GM10248 (cell line): ENCODE measurements at regions of chr3 and their contacts with region 1.

Region 1: GRCh38 chr3:44913868-44914468 is 39.6 kb downstream of the TGM4 start:
- DNase-seq: peak; percentile 77
- CTCF ChIP-seq: peak; percentile 83

Region 2: DNA sequence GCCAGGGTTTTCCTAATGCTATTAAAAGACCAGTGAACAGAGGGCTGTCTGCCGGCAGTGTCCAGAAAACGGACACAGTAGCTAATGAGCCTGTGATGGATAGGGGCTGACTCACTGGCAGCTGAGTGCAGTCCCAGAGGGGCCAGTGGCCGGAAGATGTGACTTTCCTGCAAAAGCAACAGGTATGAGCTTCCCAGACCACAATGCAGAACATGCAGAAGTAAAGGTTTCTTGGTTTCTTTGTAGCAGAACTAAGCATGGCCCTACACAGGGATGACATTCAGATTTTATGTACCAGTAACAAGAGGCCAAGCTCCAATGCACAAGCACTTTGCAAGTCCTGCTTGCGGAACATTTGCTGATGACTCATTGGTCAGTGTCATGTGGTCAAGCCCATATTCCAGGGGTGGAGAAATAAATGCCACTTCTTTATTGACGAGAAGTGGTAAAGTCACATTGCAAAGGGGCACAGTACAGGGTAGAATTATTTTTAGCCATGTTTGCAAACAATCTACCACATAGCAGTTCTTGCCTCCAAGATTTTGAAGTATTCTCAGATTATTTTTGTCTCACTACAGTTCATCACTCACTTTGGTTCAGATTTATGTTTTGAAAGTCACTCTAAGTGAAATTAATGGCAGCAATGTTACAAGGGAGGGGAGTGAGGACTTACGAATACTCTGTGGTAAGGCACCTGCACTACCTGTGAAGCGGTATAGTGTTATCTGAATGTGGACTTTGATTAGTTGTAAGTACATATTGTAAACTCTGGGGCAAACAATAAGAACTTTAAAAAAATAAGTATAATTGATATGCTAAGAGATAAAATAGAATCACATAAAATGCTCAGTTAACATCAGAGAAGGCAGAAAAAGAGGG is 959.9 kb before region 1 on chr3:
- CTCF ChIA-PET with region 1: no interaction called
- POLR2A ChIA-PET with region 1: no interaction called
- DNase-seq: no peak
- CTCF ChIP-seq: no peak

Region 3: DNA sequence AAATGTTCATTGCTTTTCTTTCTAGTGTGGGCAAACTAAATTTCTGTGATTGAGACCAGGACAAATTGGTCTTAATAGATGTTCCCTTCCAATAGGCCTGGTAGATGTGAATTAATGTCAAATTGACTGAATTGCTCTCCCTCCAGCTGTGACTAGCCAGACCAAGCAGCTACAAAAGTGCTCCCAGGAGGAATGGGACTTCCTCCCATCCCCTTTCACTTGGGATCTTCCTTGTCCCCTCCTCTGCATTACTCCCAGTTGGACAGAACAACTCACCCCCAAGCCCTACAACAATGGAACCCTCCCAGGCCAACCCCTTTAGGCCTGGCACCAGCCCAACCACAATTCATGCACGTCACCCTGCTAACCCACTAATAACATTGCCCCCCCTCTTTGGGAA is 378.6 kb before region 1 on chr3:
- CTCF ChIA-PET with region 1: interaction called, 95 read pairs
- POLR2A ChIA-PET with region 1: no interaction called
- DNase-seq: no peak
- CTCF ChIP-seq: no peak

Region 4: DNA sequence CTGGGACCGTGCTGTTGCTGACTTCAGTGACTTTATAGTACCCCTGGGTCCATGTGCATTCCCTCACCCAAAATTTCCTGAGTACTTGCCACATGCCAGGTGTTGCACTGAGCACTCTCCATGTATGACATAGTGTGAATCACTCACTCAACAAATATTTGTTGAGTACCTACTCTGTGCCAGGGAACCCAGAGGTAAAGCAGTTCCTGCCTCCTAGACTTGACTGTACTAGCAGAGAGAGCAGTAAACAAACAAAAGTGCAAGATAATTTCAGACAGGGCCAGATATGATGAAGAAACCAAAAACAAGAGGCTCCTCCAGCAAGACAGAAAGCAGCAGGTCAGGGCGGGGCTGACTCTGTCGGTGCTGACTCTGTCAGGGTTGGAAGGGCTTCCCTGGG is 27.4 kb before region 1 on chr3:
- CTCF ChIA-PET with region 1: interaction called, 25 read pairs
- POLR2A ChIA-PET with region 1: no interaction called
- DNase-seq: no peak
- CTCF ChIP-seq: no peak

Region 5: DNA sequence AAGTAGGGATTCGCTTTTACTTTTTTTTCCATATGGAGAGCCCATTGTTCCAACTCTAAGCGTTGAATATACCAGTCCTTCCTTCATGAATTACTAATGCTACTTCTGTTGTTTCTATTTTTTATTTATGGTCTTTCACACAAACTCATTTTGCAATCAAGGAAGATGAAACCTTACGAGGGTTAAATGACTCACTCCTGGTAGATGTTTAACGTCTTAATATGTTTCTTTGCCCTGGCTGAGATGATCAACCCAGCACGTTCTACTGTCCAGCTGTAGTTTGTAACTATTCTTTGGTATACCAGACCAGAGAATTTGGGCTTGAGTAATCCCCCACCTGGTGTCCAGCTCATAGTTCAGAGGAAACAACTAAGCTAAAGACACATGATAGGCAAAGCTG is 209.1 kb after region 1 on chr3:
- CTCF ChIA-PET with region 1: no interaction called
- POLR2A ChIA-PET with region 1: no interaction called
- DNase-seq: peak; percentile 57
- CTCF ChIP-seq: no peak